ENCODE measurements at regions of chr10 and their contacts with region 1.

Region 1: GRCh38 chr10:25226775-25227682 is 52.2 kb downstream of the GPR158 start:
- DNase-seq: peak; percentile 22
- ATAC-seq: no peak
- H3K4me3 ChIP-seq: no peak overlapping the region
- H3K27ac ChIP-seq: no peak overlapping the region
- H3K4me1 ChIP-seq: no peaks in the 10 kb centered on the region
- H3K27me3 ChIP-seq: no peaks in the 10 kb centered on the region
- CTCF ChIP-seq: peak; percentile 54
- POLR2A ChIP-seq: no peak
- RAD21 ChIP-seq: peak; percentile 62

Region 2: GRCh38 chr10:24826019-24826418 is 401.0 kb before region 1 on chr10:
- CTCF ChIA-PET with region 1: no interaction called
- POLR2A ChIA-PET with region 1: no interaction called
- dilution Hi-C with region 1: no loop called
- in situ Hi-C with region 1: no loop called
- intact Hi-C with region 1: no loop called
- DNase-seq: peak; percentile 78
- ATAC-seq: peak; percentile 74
- H3K4me3 ChIP-seq: no peak overlapping the region
- H3K27ac ChIP-seq: no peak overlapping the region
- H3K4me1 ChIP-seq: peaks cover 2% of the 10 kb centered on the region
- H3K27me3 ChIP-seq: no peaks in the 10 kb centered on the region
- CTCF ChIP-seq: no peak
- POLR2A ChIP-seq: no peak
- RAD21 ChIP-seq: no peak

Region 3: DNA sequence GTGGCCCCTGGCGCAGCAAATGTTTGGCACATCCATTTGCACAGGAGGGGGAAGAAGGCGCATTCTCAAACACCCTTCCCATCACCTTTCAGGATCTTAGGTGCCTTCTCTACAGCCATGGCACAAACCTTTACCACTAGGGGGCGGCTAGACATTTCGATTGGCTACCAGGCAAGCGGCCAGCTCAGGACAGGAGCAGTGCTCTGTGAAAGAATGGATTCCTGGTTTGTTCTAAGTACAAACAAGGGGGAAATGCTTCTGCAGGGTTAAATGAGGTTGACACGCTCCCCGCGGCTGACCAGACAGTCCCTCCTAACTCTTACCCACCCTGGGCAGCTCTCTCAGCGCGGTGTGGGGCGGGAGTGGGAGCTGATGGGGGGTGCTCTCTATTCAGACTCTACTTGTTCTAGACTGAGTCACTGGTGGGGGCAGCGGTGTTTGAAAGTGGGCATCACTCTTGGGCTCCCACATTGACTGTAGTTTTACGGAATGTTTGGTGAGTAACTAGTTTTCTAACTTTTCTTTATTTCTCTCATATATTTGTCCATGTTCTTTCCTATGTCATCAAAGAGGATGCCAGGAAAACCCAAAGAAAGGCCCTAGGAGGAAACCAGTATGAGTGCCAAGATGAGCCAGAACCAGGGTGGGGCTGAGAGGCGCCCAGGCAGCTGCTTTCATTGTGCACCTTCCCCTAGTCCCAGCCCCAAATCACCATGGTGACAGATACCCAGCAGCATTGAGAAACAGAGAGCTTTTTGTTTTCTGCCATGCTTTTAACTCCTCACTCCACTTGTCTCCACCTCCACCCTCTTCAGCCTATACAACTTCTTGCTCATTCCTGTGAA is 113.6 kb before region 1 on chr10:
- CTCF ChIA-PET with region 1: interaction called, 5 read pairs
- POLR2A ChIA-PET with region 1: no interaction called
- dilution Hi-C with region 1: no loop called
- in situ Hi-C with region 1: no loop called
- intact Hi-C with region 1: loop called (anchors 5 kb)
- DNase-seq: peak; percentile 53
- ATAC-seq: peak; percentile 96
- H3K4me3 ChIP-seq: no peak overlapping the region
- H3K27ac ChIP-seq: no peak overlapping the region
- H3K4me1 ChIP-seq: no peaks in the 10 kb centered on the region
- H3K27me3 ChIP-seq: no peaks in the 10 kb centered on the region
- CTCF ChIP-seq: peak; percentile 59
- POLR2A ChIP-seq: no peak
- RAD21 ChIP-seq: peak; percentile 41